B cell (primary cell): ENCODE measurements at regions of chrX and their contacts with region 1.

Region 1: GRCh38 chrX:119004920-119005524 is 30.6 kb downstream of the LONRF3 start:
- DNase-seq: peak; percentile 57
- ATAC-seq: peak; percentile 84
- H3K4me3 ChIP-seq: no peak overlapping the region
- H3K4me3 Mint-ChIP-seq: no peak overlapping the region
- H3K27ac ChIP-seq: no peak overlapping the region
- H3K27ac Mint-ChIP-seq: no peak overlapping the region
- H3K4me1 ChIP-seq: no peaks in the 10 kb centered on the region
- H3K4me1 Mint-ChIP-seq: no peaks in the 10 kb centered on the region
- H3K27me3 ChIP-seq: no peaks in the 10 kb centered on the region
- H3K27me3 Mint-ChIP-seq: peaks cover 3% of the 10 kb centered on the region
- CTCF ChIP-seq: peak; percentile 82

Region 2: DNA sequence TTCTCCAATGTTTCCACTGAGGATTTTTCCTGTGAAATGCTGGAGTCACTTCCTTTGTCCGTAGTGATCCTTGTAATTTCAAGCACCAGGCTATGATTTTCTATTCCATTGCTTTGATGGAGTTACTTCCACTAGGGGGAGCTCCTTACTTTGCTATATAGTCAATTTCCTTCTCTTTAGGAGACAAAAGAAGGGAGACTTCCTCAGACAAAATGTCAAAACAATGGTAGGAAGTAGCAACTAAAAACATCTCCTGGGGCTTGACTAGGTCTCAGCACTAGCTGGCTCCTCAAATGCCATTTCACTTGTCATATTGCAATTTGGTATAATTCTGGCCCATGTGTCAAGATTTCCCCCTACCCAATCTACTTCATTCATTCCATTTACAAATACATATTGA is 157.3 kb before region 1 on chrX:
- CTCF ChIA-PET with region 1: interaction called, 34 read pairs
- POLR2A ChIA-PET with region 1: no interaction called
- intact Hi-C with region 1: loop called (anchors 1 kb)
- DNase-seq: peak; percentile 65
- ATAC-seq: peak; percentile 39
- H3K4me3 ChIP-seq: no peak overlapping the region
- H3K4me3 Mint-ChIP-seq: no peak overlapping the region
- H3K27ac ChIP-seq: no peak overlapping the region
- H3K27ac Mint-ChIP-seq: no peak overlapping the region
- H3K4me1 ChIP-seq: no peaks in the 10 kb centered on the region
- H3K4me1 Mint-ChIP-seq: no peaks in the 10 kb centered on the region
- H3K27me3 ChIP-seq: no peaks in the 10 kb centered on the region
- H3K27me3 Mint-ChIP-seq: peaks cover 3% of the 10 kb centered on the region
- CTCF ChIP-seq: peak; percentile 71

Region 3: GRCh38 chrX:118974088-118974907 is 30.7 kb before region 1 on chrX and contains the start of gene LONRF3:
- CTCF ChIA-PET with region 1: interaction called, 7 read pairs
- POLR2A ChIA-PET with region 1: no interaction called
- intact Hi-C with region 1: loop called (anchors 2 kb)
- DNase-seq: peak; percentile 72
- ATAC-seq: peak; percentile 36
- H3K4me3 ChIP-seq: peak within 1 kb of the TSS; percentile 14 to 64 (median 51)
- H3K4me3 Mint-ChIP-seq: peak within 1 kb of the TSS; percentile 94
- H3K27ac ChIP-seq: no peak within 1 kb of the TSS
- H3K27ac Mint-ChIP-seq: peak within 1 kb of the TSS; percentile 85
- H3K4me1 ChIP-seq: peaks cover 19 to 31% of the 10 kb centered on the region in 2 donors
- H3K4me1 Mint-ChIP-seq: peaks cover 21% of the 10 kb centered on the region
- H3K27me3 ChIP-seq: peaks cover 0 to 52% (median 15%) of the 10 kb centered on the region in 4 experiments
- H3K27me3 Mint-ChIP-seq: peaks cover 18% of the 10 kb centered on the region
- CTCF ChIP-seq: no peak
- total RNA-seq, gene LONRF3: 1.2 and 1.7 TPM in 2 replicates

Region 4: GRCh38 chrX:119015407-119016237 is 10.6 kb after region 1 on chrX:
- CTCF ChIA-PET with region 1: interaction called, 31 read pairs
- POLR2A ChIA-PET with region 1: no interaction called
- intact Hi-C with region 1: no loop called
- DNase-seq: peak; percentile 76
- ATAC-seq: peak; percentile 79
- H3K4me3 ChIP-seq: peak overlapping the region in 1 of 5 experiments; percentile 31
- H3K4me3 Mint-ChIP-seq: peak overlapping the region; percentile 32
- H3K27ac ChIP-seq: peak overlapping the region; percentile 66 to 72
- H3K27ac Mint-ChIP-seq: peak overlapping the region; percentile 95
- H3K4me1 ChIP-seq: peaks cover 16 to 21% of the 10 kb centered on the region in 2 donors
- H3K4me1 Mint-ChIP-seq: peaks cover 24% of the 10 kb centered on the region
- H3K27me3 ChIP-seq: no peaks in the 10 kb centered on the region
- H3K27me3 Mint-ChIP-seq: no peaks in the 10 kb centered on the region
- CTCF ChIP-seq: no peak

Region 5: GRCh38 chrX:119067023-119067739 is 62.2 kb after region 1 on chrX:
- CTCF ChIA-PET with region 1: interaction called, 104 read pairs
- POLR2A ChIA-PET with region 1: no interaction called
- intact Hi-C with region 1: loop called (anchors 1 kb)
- DNase-seq: peak; percentile 66
- ATAC-seq: peak; percentile 84
- H3K4me3 ChIP-seq: no peak overlapping the region
- H3K4me3 Mint-ChIP-seq: no peak overlapping the region
- H3K27ac ChIP-seq: no peak overlapping the region
- H3K27ac Mint-ChIP-seq: no peak overlapping the region
- H3K4me1 ChIP-seq: peaks cover 11 to 21% of the 10 kb centered on the region in 2 donors
- H3K4me1 Mint-ChIP-seq: peaks cover 14% of the 10 kb centered on the region
- H3K27me3 ChIP-seq: no peaks in the 10 kb centered on the region
- H3K27me3 Mint-ChIP-seq: no peaks in the 10 kb centered on the region
- CTCF ChIP-seq: peak; percentile 63